WTC11 (cell line): ENCODE measurements at regions of chr2 and their contacts with region 1.

Region 1: DNA sequence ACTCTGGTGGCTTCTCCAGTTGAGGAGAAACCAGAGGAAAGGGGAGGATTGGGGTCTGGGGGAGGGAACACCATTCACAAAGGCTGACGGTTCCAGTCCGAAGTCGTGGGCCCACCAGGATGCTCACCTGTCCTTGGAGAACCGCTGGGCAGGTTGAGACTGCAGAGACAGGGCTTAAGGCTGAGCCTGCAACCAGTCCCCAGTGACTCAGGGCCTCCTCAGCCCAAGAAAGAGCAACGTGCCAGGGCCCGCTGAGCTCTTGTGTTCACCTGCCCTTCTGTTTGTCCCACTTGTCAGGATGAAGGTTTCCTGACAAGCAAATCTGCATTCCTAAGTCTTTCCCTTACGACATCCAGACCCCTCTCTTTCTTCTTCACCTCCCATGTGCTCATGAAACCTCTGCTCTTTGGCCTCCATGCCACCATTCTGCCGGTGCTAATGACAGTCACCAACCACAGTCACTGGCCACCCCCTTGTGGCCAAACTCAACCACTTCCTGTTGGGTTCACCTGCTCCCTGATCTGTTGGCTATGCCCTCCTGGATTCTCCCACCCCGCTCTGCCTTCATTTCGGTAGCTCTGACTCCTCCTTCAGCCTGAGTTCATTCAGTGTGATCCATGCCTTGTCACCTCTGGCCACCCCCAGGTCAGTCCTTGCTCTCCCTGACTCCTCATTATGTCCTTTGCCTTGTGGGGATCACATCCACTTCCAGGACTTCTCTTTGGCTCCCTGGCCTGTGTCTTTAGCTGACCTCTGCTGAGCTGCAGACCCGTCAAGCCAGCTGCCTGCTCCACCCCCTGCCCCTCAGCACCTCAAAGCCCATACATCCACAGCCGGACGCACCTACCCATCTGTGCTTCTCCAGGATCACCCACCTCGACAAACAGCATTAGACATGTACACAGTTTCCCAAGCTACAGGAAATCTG is 17.6 kb downstream of the EMX1 start:
- DNase-seq: peak; percentile 54
- ATAC-seq: peak; percentile 53
- H3K4me3 Mint-ChIP-seq: no peak overlapping the region
- H3K27ac Mint-ChIP-seq: no peak overlapping the region
- H3K4me1 Mint-ChIP-seq: peaks cover 39% of the 10 kb centered on the region
- H3K27me3 Mint-ChIP-seq: peaks cover 52% of the 10 kb centered on the region
- CTCF ChIP-seq: no peak; the same call in 1 of the 2 replicates

Region 2: GRCh38 chr2:72915907-72916742 is 18.8 kb before region 1 on chr2:
- CTCF ChIA-PET with region 1: interaction called, 22 read pairs
- POLR2A ChIA-PET with region 1: no interaction called
- DNase-seq: peak; percentile 84
- ATAC-seq: peak; percentile 32
- H3K4me3 Mint-ChIP-seq: peak overlapping the region; percentile 84
- H3K27ac Mint-ChIP-seq: no peak overlapping the region
- H3K4me1 Mint-ChIP-seq: peaks cover 43% of the 10 kb centered on the region
- H3K27me3 Mint-ChIP-seq: peaks cover 61% of the 10 kb centered on the region
- CTCF ChIP-seq: no peak

Region 3: DNA sequence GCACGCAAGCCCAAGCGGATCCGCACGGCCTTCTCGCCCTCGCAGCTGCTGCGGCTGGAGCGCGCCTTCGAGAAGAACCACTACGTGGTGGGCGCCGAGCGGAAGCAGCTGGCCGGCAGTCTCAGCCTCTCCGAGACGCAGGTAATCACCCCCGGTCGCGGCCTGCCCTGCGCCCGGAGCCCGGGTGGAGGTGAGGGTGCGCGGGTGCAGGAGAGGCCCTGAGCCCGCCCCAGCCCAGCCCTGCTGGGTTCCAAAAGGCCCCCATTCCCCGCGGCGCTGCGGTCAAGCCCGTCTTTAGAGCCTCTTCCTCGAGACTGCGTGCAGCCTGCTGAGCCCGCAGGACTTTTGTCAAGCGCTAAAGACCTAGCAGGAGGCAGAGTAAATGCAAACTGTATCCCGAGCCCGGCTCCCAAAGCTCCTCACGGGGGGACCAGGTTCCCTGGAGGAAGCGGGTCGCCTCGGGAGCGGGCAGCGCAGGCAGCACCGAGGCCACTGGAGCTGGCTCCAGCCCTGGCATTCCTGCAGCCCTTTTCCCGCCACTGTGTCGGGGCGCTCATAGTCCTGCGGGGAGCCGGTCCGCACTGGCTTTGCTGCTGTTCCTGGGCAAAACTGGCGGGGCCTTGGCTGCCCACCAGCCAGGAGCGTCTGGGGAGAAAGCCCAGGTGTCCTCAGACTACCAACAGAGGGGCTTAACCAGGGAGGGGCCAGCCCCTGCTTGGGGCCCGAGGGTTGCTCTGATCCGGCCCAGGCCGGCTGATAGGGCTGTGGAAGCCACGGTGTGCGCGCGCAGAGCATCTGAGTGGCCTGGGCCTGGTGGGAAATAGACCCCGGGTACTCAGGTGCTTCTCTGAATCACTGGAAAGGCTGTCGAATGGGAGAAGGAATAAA is 10.3 kb before region 1 on chr2:
- CTCF ChIA-PET with region 1: interaction called, 29 read pairs
- POLR2A ChIA-PET with region 1: no interaction called
- DNase-seq: peak; percentile 58
- ATAC-seq: peak; percentile 14
- H3K4me3 Mint-ChIP-seq: peak overlapping the region; percentile 72
- H3K27ac Mint-ChIP-seq: no peak overlapping the region
- H3K4me1 Mint-ChIP-seq: peaks cover 28% of the 10 kb centered on the region
- H3K27me3 Mint-ChIP-seq: no peaks in the 10 kb centered on the region
- CTCF ChIP-seq: no peak

Region 4: DNA sequence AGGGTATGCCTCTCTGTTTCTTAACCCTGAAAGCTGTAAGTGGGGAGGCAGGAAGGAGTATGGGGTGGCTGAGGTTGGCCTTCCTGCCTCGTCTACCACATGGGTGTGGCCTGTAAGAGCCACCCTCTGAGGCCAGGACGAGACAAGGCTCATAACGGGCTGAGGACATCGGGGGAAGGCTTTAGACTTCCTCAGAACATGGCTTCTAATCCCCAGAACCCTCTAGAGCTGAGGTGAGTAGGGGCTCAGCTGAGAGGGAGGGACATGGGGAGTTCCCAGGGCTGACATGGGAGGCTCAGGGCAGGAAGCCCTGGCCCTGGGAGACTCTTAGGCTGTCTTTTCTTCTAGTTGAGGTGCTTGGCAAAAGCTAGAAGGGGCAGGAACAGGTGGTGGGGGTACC is 19.0 kb after region 1 on chr2:
- CTCF ChIA-PET with region 1: interaction called, 50 read pairs
- POLR2A ChIA-PET with region 1: interaction called, 3 read pairs
- DNase-seq: no peak
- ATAC-seq: no peak
- H3K4me3 Mint-ChIP-seq: no peak overlapping the region
- H3K27ac Mint-ChIP-seq: no peak overlapping the region
- H3K4me1 Mint-ChIP-seq: peaks cover 51% of the 10 kb centered on the region
- H3K27me3 Mint-ChIP-seq: no peaks in the 10 kb centered on the region
- CTCF ChIP-seq: no peak

Region 5: DNA sequence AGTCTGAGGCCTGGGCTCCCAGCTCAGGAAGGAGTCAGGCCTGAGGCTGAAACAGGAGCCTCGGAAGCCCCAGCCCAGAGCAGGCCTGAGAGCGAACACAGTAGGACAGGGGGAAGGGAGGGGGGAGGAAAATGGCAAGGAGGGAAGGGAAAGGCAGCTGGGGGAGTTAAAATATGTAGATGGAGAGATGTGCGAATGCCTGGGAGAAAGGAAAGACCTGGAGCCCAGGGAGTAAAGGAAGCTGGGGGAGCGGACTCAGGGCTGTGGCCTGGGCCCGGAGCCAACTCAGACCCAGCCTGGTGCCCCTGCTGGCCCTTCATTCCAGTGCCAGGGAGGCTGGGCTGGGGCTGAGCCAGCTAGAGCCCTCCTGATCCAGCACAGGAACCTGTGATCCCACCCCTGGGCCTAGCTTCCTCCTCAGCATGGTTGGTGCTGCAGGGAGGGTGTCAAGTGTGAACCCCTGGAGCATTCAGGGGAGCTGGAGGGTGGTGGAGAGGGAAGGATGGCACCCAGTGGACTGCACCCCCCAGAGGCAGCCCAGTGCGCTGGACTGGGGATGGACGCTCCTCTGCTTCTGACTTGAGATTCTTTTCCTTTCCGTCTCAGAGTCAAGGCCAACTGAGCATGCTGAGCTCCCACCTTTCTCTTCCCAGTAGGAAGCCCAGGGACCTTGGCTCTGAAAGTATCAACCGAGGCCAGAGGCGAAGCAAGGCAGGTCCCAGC is 28.6 kb after region 1 on chr2:
- CTCF ChIA-PET with region 1: interaction called, 18 read pairs
- POLR2A ChIA-PET with region 1: interaction called, 7 read pairs
- DNase-seq: peak; percentile 73
- ATAC-seq: peak; percentile 84
- H3K4me3 Mint-ChIP-seq: no peak overlapping the region
- H3K27ac Mint-ChIP-seq: peak overlapping the region; percentile 98
- H3K4me1 Mint-ChIP-seq: peaks cover 53% of the 10 kb centered on the region
- H3K27me3 Mint-ChIP-seq: peaks cover 7% of the 10 kb centered on the region
- CTCF ChIP-seq: no peak

Region 6: DNA sequence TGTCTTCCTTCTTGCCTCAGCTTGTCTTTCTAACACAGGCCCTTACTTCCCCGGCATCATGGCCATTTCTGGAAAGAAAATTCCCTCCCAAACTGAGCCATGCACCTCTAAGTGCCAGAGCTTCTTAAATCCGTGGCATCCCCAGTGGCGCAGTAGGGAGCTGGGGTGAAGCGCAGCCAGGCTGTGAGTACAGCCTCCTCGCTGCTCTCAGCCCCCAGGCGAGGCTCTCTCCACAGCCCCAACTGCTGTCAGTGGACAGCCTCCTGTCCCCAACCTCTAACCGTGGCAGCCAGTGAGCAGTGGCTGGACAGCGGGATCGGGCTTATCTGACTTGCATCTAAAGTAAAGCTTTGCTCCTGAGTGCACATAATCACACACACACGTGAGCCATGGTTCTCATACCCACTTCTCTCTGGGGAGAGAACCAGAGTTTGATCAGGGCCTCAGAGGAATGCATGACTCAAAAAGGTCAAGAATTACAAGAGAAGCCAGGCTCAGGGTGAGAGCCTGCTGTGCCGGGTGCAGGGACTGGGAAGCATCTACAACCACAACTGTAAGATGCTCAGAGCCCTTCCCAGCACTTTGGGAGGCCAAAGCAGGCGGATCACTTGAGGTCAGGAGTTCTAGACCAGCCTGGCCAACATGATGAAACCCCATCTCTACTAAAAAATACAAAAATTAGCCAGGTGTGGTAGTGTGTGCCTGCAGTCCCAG is 85.9 kb after region 1 on chr2:
- CTCF ChIA-PET with region 1: no interaction called
- POLR2A ChIA-PET with region 1: no interaction called
- DNase-seq: no peak
- ATAC-seq: no peak
- H3K4me3 Mint-ChIP-seq: no peak overlapping the region
- H3K27ac Mint-ChIP-seq: peak overlapping the region; percentile 1; the same call in 1 of the 2 replicates
- H3K4me1 Mint-ChIP-seq: peaks cover 11% of the 10 kb centered on the region
- H3K27me3 Mint-ChIP-seq: no peaks in the 10 kb centered on the region
- CTCF ChIP-seq: no peak

Region 7: GRCh38 chr2:74092275-74092674 is 1157.3 kb after region 1 on chr2:
- CTCF ChIA-PET with region 1: no interaction called
- POLR2A ChIA-PET with region 1: no interaction called
- DNase-seq: no peak
- ATAC-seq: no peak
- H3K4me3 Mint-ChIP-seq: no peak overlapping the region
- H3K27ac Mint-ChIP-seq: no peak overlapping the region
- H3K4me1 Mint-ChIP-seq: peaks cover 7% of the 10 kb centered on the region
- H3K27me3 Mint-ChIP-seq: no peaks in the 10 kb centered on the region
- CTCF ChIP-seq: no peak